Activated CD4-positive, alpha-beta T cell treated with anti-CD3 and anti-CD28 coated beads for 36 hours (primary cell): ENCODE measurements at regions of chr3 and their contacts with region 1.

Region 1: DNA sequence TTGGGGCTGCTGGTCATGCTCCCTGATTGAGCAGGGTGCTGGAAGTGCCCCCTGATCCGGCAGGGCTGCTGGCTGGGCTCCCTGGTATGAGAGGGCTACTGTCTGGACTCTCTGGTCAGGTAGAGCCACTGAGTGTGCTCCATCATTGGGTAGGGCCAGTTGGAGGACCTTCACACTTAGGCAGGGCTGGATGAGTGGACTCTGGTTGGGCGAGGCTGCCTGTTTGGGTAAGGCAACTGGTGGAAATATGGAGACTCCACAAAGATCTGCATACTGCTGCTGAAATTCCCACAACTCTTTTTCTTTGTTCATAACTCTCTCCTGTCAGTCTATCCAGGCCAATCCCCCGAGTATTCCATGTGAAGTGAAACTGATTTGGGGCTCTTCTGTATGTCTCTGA is 80.8 kb downstream of the CD200 start:
- DNase-seq: no peak
- ATAC-seq: no peak
- H3K4me3 Mint-ChIP-seq: no peak overlapping the region
- H3K27ac Mint-ChIP-seq: no peak overlapping the region
- H3K4me1 Mint-ChIP-seq: peaks cover 8% of the 10 kb centered on the region
- H3K27me3 Mint-ChIP-seq: no peaks in the 10 kb centered on the region

Region 2: DNA sequence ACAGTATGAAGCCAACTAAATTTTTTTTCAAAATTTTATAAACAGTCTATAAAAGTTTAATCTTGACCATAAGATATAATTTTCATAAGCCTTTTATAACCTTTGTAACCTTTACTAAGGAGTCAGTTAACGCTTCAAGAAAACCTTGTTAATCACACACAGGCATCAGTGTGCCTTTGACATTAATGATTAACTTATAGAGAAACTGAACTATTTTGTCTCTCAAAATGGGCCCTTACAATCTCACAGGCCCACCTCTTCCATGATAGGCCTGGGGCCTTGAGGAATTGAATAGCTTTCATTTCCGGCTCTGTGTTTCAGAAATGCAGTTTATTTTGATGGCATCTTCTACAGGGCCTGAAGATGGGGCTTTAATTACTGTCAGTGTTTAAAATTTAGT is 10.6 kb before region 1 on chr3:
- CTCF ChIA-PET with region 1: no interaction called
- POLR2A ChIA-PET with region 1: no interaction called
- intact Hi-C with region 1: no loop called
- DNase-seq: no peak
- ATAC-seq: no peak
- H3K4me3 Mint-ChIP-seq: no peak overlapping the region
- H3K27ac Mint-ChIP-seq: no peak overlapping the region
- H3K4me1 Mint-ChIP-seq: peaks cover 26% of the 10 kb centered on the region
- H3K27me3 Mint-ChIP-seq: no peaks in the 10 kb centered on the region

Region 3: DNA sequence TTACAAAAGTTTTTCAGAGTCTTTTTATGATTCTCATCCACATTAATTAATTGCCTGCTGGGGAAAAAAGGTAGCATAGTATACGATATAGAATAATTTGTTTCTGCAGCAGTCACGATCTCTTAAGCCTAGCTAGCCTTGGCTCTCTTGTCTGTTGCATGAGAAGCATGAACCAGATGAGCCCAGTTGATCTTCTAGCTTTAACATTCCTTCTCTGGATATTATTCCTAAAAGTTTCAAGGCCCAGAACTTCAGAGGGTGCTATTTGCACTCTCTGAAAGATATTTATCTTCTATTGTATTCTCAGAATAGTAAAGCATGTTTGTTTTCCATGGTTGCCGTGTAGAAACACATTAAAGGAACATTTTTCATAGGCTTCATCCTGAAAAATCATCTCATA is 16.2 kb after region 1 on chr3:
- CTCF ChIA-PET with region 1: no interaction called
- POLR2A ChIA-PET with region 1: no interaction called
- intact Hi-C with region 1: loop called in 1 of 2 experiments (anchors 2 kb)
- DNase-seq: no peak
- ATAC-seq: no peak
- H3K4me3 Mint-ChIP-seq: no peak overlapping the region
- H3K27ac Mint-ChIP-seq: no peak overlapping the region
- H3K4me1 Mint-ChIP-seq: peaks cover 28% of the 10 kb centered on the region
- H3K27me3 Mint-ChIP-seq: no peaks in the 10 kb centered on the region

Region 4: GRCh38 chr3:112685420-112685819 is 271.7 kb after region 1 on chr3:
- CTCF ChIA-PET with region 1: no interaction called
- POLR2A ChIA-PET with region 1: no interaction called
- intact Hi-C with region 1: no loop called
- DNase-seq: no peak
- ATAC-seq: no peak
- H3K4me3 Mint-ChIP-seq: no peak overlapping the region
- H3K27ac Mint-ChIP-seq: no peak overlapping the region
- H3K4me1 Mint-ChIP-seq: peaks cover 13% of the 10 kb centered on the region
- H3K27me3 Mint-ChIP-seq: peaks cover 4% of the 10 kb centered on the region

Region 5: GRCh38 chr3:112730193-112730592 is 316.5 kb after region 1 on chr3:
- CTCF ChIA-PET with region 1: no interaction called
- POLR2A ChIA-PET with region 1: no interaction called
- intact Hi-C with region 1: no loop called
- DNase-seq: no peak
- ATAC-seq: no peak
- H3K4me3 Mint-ChIP-seq: no peak overlapping the region
- H3K27ac Mint-ChIP-seq: no peak overlapping the region
- H3K4me1 Mint-ChIP-seq: peaks cover 9% of the 10 kb centered on the region
- H3K27me3 Mint-ChIP-seq: no peaks in the 10 kb centered on the region